ENCODE measurements at regions of chrX and their contacts with region 1.

Region 1: DNA sequence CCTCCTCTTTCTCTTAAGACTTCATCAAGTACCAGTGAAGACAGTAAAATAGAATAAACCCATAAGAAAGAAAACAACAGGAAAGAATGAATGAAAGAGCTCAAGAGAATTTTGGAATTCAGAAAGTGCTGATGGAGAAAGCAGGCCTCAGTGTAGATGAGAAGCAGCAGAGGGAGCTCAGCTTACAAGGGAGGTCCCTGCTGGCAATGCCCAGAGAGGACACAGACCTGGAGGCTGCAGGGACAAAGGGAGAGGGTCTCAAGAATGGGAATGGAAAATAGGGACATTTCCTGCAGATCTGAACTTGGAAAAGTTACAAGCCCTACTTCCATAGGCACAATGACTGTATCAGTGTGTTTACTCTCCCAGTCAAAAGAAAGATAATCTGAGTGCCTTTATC is 64.5 kb upstream of the MAGEA10 start:
- DNase-seq: no peak
- H3K4me3 ChIP-seq: no peak overlapping the region
- H3K27ac ChIP-seq: no peak overlapping the region
- H3K4me1 ChIP-seq: no peaks in the 10 kb centered on the region
- H3K27me3 ChIP-seq: no peaks in the 10 kb centered on the region
- CTCF ChIP-seq: no peak

Region 2: GRCh38 chrX:152177497-152178269 is 25.2 kb before region 1 on chrX:
- CTCF ChIA-PET with region 1: interaction called, 11 read pairs
- dilution Hi-C with region 1: no loop called
- in situ Hi-C with region 1: no loop called
- intact Hi-C with region 1: no loop called
- DNase-seq: peak; percentile 4
- H3K4me3 ChIP-seq: no peak overlapping the region
- H3K27ac ChIP-seq: no peak overlapping the region
- H3K4me1 ChIP-seq: no peaks in the 10 kb centered on the region
- H3K27me3 ChIP-seq: no peaks in the 10 kb centered on the region
- CTCF ChIP-seq: no peak

Measured in mammary epithelial cell (primary cell).